Mammary epithelial cell (primary cell): ENCODE measurements at regions of chr5 and their contacts with region 1.

Region 1: GRCh38 chr5:154972476-154973080 is 31.7 kb downstream of the MRPL22 start:
- DNase-seq: peak; percentile 34
- H3K4me3 ChIP-seq: no peak overlapping the region
- H3K27ac ChIP-seq: no peak overlapping the region
- H3K4me1 ChIP-seq: no peaks in the 10 kb centered on the region
- H3K27me3 ChIP-seq: no peaks in the 10 kb centered on the region
- CTCF ChIP-seq: peak; percentile 64 to 80

Region 2: DNA sequence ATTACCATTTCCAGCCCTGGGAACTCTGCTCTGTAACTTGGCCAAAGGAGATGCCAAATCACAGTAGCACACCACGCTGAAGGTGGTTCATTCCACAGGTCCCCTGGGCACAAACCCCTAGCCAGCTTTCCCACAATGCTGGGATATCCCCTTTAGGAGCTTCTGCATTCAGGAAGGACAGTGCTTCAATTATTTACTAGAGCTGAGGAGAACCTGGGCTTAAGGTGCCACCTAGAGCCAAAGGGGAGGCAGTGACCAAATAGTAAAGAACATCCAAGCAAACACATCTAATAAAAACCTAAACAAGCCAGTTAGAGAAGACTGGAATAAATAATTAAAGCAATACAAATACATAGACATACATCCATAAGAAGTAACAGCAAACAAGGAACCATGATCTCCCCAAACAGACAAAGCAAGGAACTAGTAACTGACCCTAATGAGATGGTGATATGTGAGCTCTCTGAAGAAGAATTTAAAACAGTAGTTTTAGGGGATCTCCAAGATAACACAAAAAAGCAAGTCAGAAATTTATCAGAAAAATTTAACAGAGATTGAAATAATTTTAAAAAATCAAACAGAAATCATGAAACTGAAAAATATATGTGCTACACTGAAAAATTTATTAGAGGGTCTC is 55.5 kb after region 1 on chr5:
- CTCF ChIA-PET with region 1: interaction called, 3 read pairs
- dilution Hi-C with region 1: no loop called
- in situ Hi-C with region 1: no loop called
- intact Hi-C with region 1: loop called (anchors 1 kb)
- DNase-seq: peak; percentile 20
- H3K4me3 ChIP-seq: no peak overlapping the region
- H3K27ac ChIP-seq: no peak overlapping the region
- H3K4me1 ChIP-seq: no peaks in the 10 kb centered on the region
- H3K27me3 ChIP-seq: no peaks in the 10 kb centered on the region
- CTCF ChIP-seq: peak; percentile 40 to 56

Region 3: GRCh38 chr5:155082401-155082800 is 109.8 kb after region 1 on chr5:
- CTCF ChIA-PET with region 1: no interaction called
- dilution Hi-C with region 1: no loop called
- in situ Hi-C with region 1: no loop called
- intact Hi-C with region 1: no loop called
- DNase-seq: peak; percentile 54
- H3K4me3 ChIP-seq: no peak overlapping the region
- H3K27ac ChIP-seq: no peak overlapping the region
- H3K4me1 ChIP-seq: peaks cover 49% of the 10 kb centered on the region
- H3K27me3 ChIP-seq: no peaks in the 10 kb centered on the region
- CTCF ChIP-seq: no peak

Region 4: DNA sequence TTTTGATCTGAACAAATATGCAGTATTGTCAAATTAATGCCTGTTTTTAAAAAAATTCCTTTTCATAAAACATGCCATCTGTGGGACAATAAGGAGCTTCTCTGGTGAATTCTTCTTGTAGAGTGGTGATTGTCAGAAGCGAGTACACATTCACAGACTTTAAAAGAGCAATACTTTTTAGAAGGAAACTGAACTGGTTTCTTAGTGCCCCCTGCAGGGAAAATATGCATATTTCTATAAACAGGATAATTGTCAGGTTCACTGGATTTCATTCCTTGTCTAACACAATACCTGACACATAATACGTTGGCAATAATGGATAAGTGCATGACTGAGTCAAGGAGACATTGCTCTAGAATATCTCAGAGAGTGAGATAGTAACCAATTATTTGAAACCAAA is 174.6 kb after region 1 on chr5:
- CTCF ChIA-PET with region 1: no interaction called
- dilution Hi-C with region 1: no loop called
- in situ Hi-C with region 1: no loop called
- intact Hi-C with region 1: loop called (anchors 1 kb)
- DNase-seq: no peak
- H3K4me3 ChIP-seq: no peak overlapping the region
- H3K27ac ChIP-seq: no peak overlapping the region
- H3K4me1 ChIP-seq: no peaks in the 10 kb centered on the region
- H3K27me3 ChIP-seq: peaks cover 2% of the 10 kb centered on the region
- CTCF ChIP-seq: peak in 1 of 2 donors; percentile 25

Region 5: GRCh38 chr5:156513123-156513815 is 1540.7 kb after region 1 on chr5:
- CTCF ChIA-PET with region 1: no interaction called
- dilution Hi-C with region 1: no loop called
- in situ Hi-C with region 1: no loop called
- intact Hi-C with region 1: no loop called
- DNase-seq: no peak
- H3K4me3 ChIP-seq: no peak overlapping the region
- H3K27ac ChIP-seq: no peak overlapping the region
- H3K4me1 ChIP-seq: no peaks in the 10 kb centered on the region
- H3K27me3 ChIP-seq: no peaks in the 10 kb centered on the region
- CTCF ChIP-seq: no peak